Transverse colon (tissue), 4 donors: ENCODE measurements at regions of chr5 and their contacts with region 1.

Region 1: DNA sequence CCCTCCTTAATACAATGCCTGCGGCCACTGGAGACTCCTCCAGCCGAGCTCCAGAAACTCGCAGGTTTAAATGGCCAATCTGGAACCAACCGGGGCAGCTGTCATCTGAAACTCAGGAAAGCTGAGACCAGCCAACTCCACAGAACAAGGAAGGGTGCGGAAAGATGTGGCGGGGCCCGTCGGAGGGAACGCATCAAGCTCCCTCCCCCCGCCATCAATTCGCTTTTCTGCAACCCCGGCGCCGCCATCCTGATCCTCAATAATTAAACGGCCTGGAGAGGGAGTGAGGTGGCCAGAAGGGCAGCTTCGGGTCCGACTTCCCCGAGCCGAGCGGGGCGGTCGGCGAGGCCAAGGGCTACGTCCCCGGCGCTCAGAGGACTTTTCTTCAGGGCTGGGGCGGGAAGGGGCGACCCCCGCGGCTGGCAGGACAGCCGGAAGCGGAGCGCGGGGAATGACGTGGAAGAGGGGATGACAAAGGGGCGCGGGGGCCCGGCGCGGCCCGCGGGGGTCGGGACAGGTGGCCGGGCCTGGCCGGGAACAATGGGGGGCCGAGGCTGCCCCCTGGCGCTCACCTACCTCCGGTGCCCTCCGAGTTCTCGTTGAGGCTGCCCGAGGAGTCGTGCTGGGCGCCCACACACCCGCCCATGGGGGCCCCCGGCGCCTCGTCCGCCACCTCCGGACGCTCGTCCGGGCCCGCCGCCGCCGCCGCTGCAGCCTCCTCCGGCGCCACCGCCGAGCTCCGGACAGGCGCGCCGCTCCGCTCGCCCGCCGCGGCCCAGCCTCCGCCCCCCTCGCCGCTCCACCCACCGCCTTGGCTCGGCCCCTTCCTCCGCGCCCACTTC is at the start of gene UBTD2:
- DNase-seq: peak; percentile 88
- H3K4me3 ChIP-seq: peak within 1 kb of the TSS; percentile 82 to 97 (median 93)
- H3K27ac ChIP-seq: peak within 1 kb of the TSS; percentile 88 to 98 (median 96)
- H3K4me1 ChIP-seq: peaks cover 0 to 30% (median 21%) of the 10 kb centered on the region in 4 donors
- H3K27me3 ChIP-seq: no peaks in the 10 kb centered on the region
- CTCF ChIP-seq: peak; percentile 30 to 49 (median 46)
- EP300 ChIP-seq: no peak
- POLR2A ChIP-seq: peak; percentile 45
- total RNA-seq, gene UBTD2: 6.0 to 35.4 (median 19.0) TPM

Region 2: DNA sequence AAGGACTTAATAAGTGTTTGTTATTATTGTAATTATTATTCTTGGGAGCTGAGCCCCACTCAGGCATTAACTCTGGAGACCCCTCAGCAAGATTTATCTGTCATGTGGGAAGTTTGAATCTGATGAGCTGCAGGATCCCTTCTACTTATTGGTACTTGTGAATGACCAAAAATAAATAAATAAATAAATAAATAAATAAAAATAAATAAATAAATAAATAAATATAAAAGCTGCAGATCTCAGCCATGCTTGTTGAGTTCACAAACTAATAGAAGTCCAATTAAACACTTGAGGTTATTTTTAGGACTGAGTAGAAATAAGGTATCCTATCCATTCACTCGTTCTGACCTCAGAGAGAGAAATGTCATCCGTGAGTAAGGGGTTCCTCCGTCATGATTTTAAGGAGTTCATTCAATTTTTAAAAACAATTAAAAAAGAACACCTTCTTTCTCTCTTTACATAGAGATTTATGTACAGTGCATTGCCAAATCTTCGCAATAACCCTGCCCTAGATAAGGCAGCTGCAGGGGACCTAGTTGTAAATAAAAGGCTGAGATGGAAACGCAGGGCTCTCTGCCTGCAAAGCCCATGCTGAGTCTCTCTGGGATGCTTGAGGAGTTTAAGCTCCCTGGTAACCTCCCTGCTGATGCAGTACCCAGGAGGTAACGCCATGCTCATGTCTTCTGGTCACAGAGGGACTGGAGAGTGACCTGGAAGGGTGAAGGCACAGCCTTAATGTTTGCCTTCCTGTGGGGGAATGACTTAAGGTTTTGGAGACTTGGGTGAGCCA is 88.1 kb before region 1 on chr5:
- in situ Hi-C with region 1: loop called in 1 of 4 experiments (anchors 10 kb)
- intact Hi-C with region 1: no loop called
- DNase-seq: no peak
- H3K4me3 ChIP-seq: no peak overlapping the region
- H3K27ac ChIP-seq: no peak overlapping the region
- H3K4me1 ChIP-seq: no peaks in the 10 kb centered on the region
- H3K27me3 ChIP-seq: no peaks in the 10 kb centered on the region
- CTCF ChIP-seq: no peak
- EP300 ChIP-seq: no peak
- POLR2A ChIP-seq: no peak

Region 3: DNA sequence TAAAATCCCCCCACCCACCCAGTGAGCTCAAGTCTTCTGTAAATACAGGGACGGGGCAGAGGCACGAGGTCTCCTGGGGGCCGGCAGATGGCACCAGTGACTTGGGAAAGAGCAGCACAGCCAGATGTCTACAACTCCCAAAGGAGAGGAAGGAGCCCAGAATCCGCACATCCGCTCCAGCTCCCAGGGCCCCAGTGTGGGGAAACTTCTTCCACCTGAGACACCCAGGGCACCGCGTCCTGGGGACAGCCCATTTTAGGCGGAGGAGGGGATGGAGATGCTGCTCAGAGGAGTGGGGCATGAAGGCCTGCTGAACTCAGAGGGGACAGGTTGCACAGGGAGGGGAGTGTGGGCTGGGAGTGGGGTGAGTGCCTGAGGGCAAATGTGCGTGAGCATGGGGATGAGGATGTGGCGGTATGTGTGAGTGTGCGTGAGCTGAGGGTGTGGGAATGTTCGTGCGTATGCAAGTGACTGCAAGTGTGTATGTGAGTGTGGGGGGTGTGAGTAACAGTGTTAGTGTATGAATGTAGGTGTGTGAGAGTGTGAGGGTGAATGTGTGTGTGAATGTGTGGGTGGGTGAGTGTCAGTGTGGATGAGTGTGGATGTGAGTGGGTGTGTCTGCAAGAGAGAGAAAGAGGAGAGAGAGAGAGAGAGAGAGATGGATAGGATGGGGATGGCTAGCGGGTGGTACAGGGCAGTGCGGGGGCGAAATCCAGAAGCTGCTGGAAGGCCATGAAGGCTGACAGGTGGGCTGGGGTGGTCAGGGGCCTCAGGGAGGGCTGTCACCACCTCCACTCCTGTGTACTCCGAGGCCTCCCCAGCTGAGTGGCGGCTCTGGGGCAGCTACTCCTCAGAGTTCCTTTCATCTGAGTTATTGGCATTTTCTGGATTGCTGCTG is 424.3 kb after region 1 on chr5:
- in situ Hi-C with region 1: no loop called
- intact Hi-C with region 1: no loop called
- DNase-seq: no peak
- H3K4me3 ChIP-seq: no peak overlapping the region
- H3K27ac ChIP-seq: no peak overlapping the region
- H3K4me1 ChIP-seq: no peaks in the 10 kb centered on the region
- H3K27me3 ChIP-seq: peaks cover 37% of the 10 kb centered on the region
- CTCF ChIP-seq: peak in 2 of 5 experiments; percentile 21 to 24
- EP300 ChIP-seq: no peak
- POLR2A ChIP-seq: no peak